Activated B cell treated with CpG ODN at 0.5 μM for 24 hours (primary cell): ENCODE measurements at regions of chr2 and their contacts with region 1.

Region 1: GRCh38 chr2:74178201-74179062 is at the start of gene MOB1A:
- DNase-seq: peak; percentile 93
- ATAC-seq: peak; percentile 83
- H3K4me3 Mint-ChIP-seq: peak within 1 kb of the TSS; percentile 93
- H3K27ac Mint-ChIP-seq: peak within 1 kb of the TSS; percentile 98
- H3K4me1 Mint-ChIP-seq: peaks cover 60% of the 10 kb centered on the region
- H3K27me3 Mint-ChIP-seq: no peaks in the 10 kb centered on the region
- CTCF ChIP-seq: no peak
- total RNA-seq, gene MOB1A: 314 and 318 TPM in 2 replicates

Region 2: GRCh38 chr2:73926493-73927338 is 251.7 kb before region 1 on chr2 and contains the start of gene DGUOK:
- CTCF ChIA-PET with region 1: no interaction called
- POLR2A ChIA-PET with region 1: interaction called, 12 read pairs
- intact Hi-C with region 1: no loop called
- DNase-seq: peak; percentile 88
- ATAC-seq: peak; percentile 95
- H3K4me3 Mint-ChIP-seq: peak within 1 kb of the TSS; percentile 92
- H3K27ac Mint-ChIP-seq: peak within 1 kb of the TSS; percentile 93
- H3K4me1 Mint-ChIP-seq: peaks cover 60% of the 10 kb centered on the region
- H3K27me3 Mint-ChIP-seq: no peaks in the 10 kb centered on the region
- CTCF ChIP-seq: no peak
- total RNA-seq, gene DGUOK: 70.1 and 77.4 TPM in 2 replicates

Region 3: GRCh38 chr2:74041182-74041581 is 137.2 kb before region 1 on chr2:
- CTCF ChIA-PET with region 1: no interaction called
- POLR2A ChIA-PET with region 1: no interaction called
- intact Hi-C with region 1: no loop called
- DNase-seq: no peak
- ATAC-seq: no peak
- H3K4me3 Mint-ChIP-seq: peak overlapping the region; percentile 22
- H3K27ac Mint-ChIP-seq: peak overlapping the region; percentile 36
- H3K4me1 Mint-ChIP-seq: peaks cover 78% of the 10 kb centered on the region
- H3K27me3 Mint-ChIP-seq: no peaks in the 10 kb centered on the region
- CTCF ChIP-seq: no peak

Region 4: DNA sequence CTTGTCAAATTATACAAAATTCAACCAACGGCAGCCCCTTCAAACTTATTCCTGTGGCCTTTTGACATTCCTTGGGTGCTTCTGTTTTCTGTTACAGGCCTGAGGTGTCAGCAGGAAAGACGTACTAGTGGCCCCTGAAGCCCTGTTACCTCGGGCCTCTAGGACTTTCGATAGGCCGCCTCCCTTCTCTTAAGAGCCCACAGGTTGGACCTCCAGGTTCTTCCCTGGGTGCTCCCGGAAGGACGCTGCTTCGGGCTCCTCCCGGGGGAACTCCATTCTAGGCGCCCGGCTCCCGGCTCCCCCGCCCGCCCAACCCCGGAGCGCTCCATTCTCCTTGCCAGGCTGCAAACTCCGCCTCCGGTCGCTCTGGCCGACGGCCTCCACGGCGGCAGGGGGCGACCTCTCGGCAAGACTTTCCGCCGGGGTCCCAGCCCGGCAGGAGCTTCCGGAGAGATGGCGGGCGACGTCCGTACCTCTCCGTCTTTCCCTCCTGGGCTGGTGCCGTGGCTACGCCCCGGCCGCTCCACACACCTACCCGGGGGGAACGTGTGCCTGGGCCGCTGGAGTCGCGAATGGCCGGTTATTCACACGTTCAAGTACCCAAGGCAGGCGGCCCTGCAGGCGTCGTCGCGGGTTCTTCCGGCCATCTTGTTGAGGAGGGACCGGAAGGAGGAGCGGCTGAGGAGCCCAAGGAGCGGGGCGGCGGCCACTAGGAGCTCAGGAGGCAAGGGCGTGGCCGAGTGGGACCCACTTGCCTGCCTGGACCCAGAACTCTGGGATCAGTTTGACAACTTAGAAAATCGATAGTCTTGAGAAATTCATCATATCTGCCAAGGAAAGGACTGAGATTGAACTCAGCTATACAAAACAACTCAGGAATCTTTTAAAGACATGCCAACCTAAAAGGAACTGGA is 58.3 kb before region 1 on chr2:
- CTCF ChIA-PET with region 1: interaction called, 4 read pairs
- POLR2A ChIA-PET with region 1: interaction called, 17 read pairs
- intact Hi-C with region 1: no loop called
- DNase-seq: peak; percentile 86
- ATAC-seq: peak; percentile 95
- H3K4me3 Mint-ChIP-seq: peak overlapping the region; percentile 89
- H3K27ac Mint-ChIP-seq: peak overlapping the region; percentile 94
- H3K4me1 Mint-ChIP-seq: peaks cover 6% of the 10 kb centered on the region
- H3K27me3 Mint-ChIP-seq: peaks cover 4% of the 10 kb centered on the region
- CTCF ChIP-seq: no peak

Region 5: DNA sequence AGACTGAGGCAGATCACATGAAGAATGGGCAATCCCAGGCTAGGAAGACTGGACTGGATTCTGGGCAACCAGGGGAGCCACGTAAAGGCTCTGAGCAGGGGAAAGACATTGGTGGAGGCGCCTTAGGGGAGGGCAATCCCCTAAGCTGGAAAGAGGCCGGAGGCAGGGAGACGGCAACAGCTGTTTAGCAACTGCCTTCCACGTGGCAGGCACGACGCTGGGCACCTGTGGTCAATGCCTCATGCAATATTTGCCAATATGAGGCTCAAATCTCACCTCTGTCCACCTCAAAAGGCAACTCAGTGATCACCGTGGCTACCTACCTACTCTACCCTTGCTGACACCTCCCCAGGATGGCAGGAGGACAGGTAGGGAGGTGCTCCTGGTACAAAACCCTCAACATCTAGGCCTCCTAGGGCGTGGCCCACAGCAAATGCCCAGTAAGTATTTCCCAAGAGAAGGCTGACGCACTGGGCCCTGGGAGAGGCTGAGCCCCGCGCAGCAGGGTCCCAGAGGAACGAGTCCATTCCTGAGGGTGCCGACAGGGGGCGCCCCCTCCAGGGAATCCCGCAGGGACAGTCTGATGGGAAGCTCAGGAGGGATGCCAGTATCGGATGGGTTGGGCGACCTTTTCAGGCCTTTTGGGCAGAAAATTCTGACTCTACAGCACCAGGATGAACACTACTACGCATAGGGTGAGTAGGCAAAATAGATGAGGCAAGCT is 39.7 kb before region 1 on chr2:
- CTCF ChIA-PET with region 1: no interaction called
- POLR2A ChIA-PET with region 1: no interaction called
- intact Hi-C with region 1: no loop called
- DNase-seq: no peak
- ATAC-seq: no peak
- H3K4me3 Mint-ChIP-seq: no peak overlapping the region
- H3K27ac Mint-ChIP-seq: no peak overlapping the region
- H3K4me1 Mint-ChIP-seq: peaks cover 2% of the 10 kb centered on the region
- H3K27me3 Mint-ChIP-seq: no peaks in the 10 kb centered on the region
- CTCF ChIP-seq: no peak

Region 6: GRCh38 chr2:74162951-74163350 is 15.5 kb before region 1 on chr2:
- CTCF ChIA-PET with region 1: interaction called, 5 read pairs
- POLR2A ChIA-PET with region 1: interaction called, 36 read pairs
- intact Hi-C with region 1: loop called (anchors 2 kb)
- DNase-seq: no peak
- ATAC-seq: no peak
- H3K4me3 Mint-ChIP-seq: no peak overlapping the region
- H3K27ac Mint-ChIP-seq: no peak overlapping the region
- H3K4me1 Mint-ChIP-seq: peaks cover 3% of the 10 kb centered on the region
- H3K27me3 Mint-ChIP-seq: no peaks in the 10 kb centered on the region
- CTCF ChIP-seq: no peak

Region 7: GRCh38 chr2:74212702-74213410 is 34.4 kb after region 1 on chr2:
- CTCF ChIA-PET with region 1: interaction called, 3 read pairs
- POLR2A ChIA-PET with region 1: interaction called, 723 read pairs
- intact Hi-C with region 1: loop called (anchors 5 kb)
- DNase-seq: no peak
- ATAC-seq: no peak
- H3K4me3 Mint-ChIP-seq: no peak overlapping the region
- H3K27ac Mint-ChIP-seq: peak overlapping the region; percentile 41
- H3K4me1 Mint-ChIP-seq: peaks cover 16% of the 10 kb centered on the region
- H3K27me3 Mint-ChIP-seq: no peaks in the 10 kb centered on the region
- CTCF ChIP-seq: no peak

Region 8: DNA sequence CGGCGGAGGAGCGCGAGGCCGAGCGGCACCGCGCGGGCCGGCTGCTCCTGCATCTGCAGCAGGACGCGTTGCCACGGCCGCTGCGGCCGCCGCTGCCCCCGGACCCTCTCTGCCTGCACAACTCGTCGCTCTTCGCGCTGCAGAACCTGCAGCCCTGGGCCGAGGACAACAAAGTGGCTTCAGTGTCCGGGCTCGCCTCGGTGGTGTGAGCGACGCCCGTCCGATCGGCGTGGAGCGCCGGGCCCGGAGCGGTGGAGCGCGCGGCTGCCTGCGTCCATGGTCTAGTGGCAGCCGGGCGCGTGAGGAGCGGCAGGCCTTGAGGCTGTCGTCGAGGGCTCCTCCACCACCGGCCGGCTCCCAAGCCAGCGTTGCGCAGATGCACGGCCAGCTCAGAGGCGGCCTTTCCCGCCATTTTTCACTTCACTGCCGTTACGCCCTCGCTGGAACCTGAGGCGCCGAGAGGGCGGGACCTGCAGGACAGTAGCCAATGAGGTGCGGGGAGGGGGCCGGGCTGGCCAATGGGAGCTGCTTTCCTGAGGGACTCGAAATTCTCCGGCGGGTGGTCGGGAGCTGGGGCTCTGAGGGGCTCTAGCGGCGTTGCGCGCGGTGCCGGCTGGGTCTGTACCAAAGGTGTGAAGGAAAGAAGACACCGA is 337.7 kb after region 1 on chr2:
- CTCF ChIA-PET with region 1: no interaction called
- POLR2A ChIA-PET with region 1: no interaction called
- intact Hi-C with region 1: loop called (anchors 10 kb)
- DNase-seq: peak; percentile 66
- ATAC-seq: peak; percentile 87
- H3K4me3 Mint-ChIP-seq: peak overlapping the region; percentile 78
- H3K27ac Mint-ChIP-seq: no peak overlapping the region
- H3K4me1 Mint-ChIP-seq: peaks cover 28% of the 10 kb centered on the region
- H3K27me3 Mint-ChIP-seq: peaks cover 57% of the 10 kb centered on the region
- CTCF ChIP-seq: no peak